ENCODE measurements at regions of chr5 and their contacts with region 1.

Region 1: GRCh38 chr5:6765612-6766525 is 52.6 kb downstream of the TENT4A start:
- DNase-seq: peak; percentile 11 to 69 (median 42)
- ATAC-seq: peak; percentile 75
- H3K4me3 ChIP-seq: no peak overlapping the region
- H3K4me3 Mint-ChIP-seq: no peak overlapping the region
- H3K27ac ChIP-seq: no peak overlapping the region
- H3K27ac Mint-ChIP-seq: peak overlapping the region in 1 of 9 donors; percentile 51
- H3K4me1 ChIP-seq: no peaks in the 10 kb centered on the region
- H3K4me1 Mint-ChIP-seq: peaks cover 0 to 9% (median 6%) of the 10 kb centered on the region in 7 donors
- H3K27me3 ChIP-seq: no peaks in the 10 kb centered on the region
- H3K27me3 Mint-ChIP-seq: peaks cover 0 to 4% (median 0%) of the 10 kb centered on the region in 5 donors

Region 2: GRCh38 chr5:6728011-6728794 is 37.7 kb before region 1 on chr5:
- CTCF ChIA-PET with region 1: no interaction called
- POLR2A ChIA-PET with region 1: no interaction called
- intact Hi-C with region 1: no loop called
- DNase-seq: no peak
- ATAC-seq: no peak
- H3K4me3 ChIP-seq: no peak overlapping the region
- H3K4me3 Mint-ChIP-seq: peak overlapping the region in 9 of 10 donors; percentile 2 to 58 (median 52)
- H3K27ac ChIP-seq: no peak overlapping the region
- H3K27ac Mint-ChIP-seq: peak overlapping the region in 8 of 9 donors; percentile 5 to 82 (median 44)
- H3K4me1 ChIP-seq: peaks cover 22 to 56% of the 10 kb centered on the region in 2 donors
- H3K4me1 Mint-ChIP-seq: peaks cover 75 to 100% (median 95%) of the 10 kb centered on the region in 7 donors
- H3K27me3 ChIP-seq: no peaks in the 10 kb centered on the region
- H3K27me3 Mint-ChIP-seq: no peaks in the 10 kb centered on the region

Region 3: GRCh38 chr5:6745706-6746222 is 20.1 kb before region 1 on chr5:
- CTCF ChIA-PET with region 1: no interaction called
- POLR2A ChIA-PET with region 1: no interaction called
- intact Hi-C with region 1: no loop called
- DNase-seq: peak in 7 of 9 donors; percentile 33 to 62 (median 53)
- ATAC-seq: peak; percentile 85
- H3K4me3 ChIP-seq: no peak overlapping the region
- H3K4me3 Mint-ChIP-seq: no peak overlapping the region
- H3K27ac ChIP-seq: no peak overlapping the region
- H3K27ac Mint-ChIP-seq: peak overlapping the region in 3 of 9 donors; percentile 4 to 48 (median 36)
- H3K4me1 ChIP-seq: no peaks in the 10 kb centered on the region
- H3K4me1 Mint-ChIP-seq: peaks cover 2 to 10% (median 6%) of the 10 kb centered on the region in 7 donors
- H3K27me3 ChIP-seq: no peaks in the 10 kb centered on the region
- H3K27me3 Mint-ChIP-seq: no peaks in the 10 kb centered on the region

Region 4: GRCh38 chr5:6837519-6838110 is 71.7 kb after region 1 on chr5:
- CTCF ChIA-PET with region 1: no interaction called
- POLR2A ChIA-PET with region 1: no interaction called
- intact Hi-C with region 1: loop called (anchors 1 to 5 kb)
- DNase-seq: peak in 1 of 9 donors; percentile 39
- ATAC-seq: no peak
- H3K4me3 ChIP-seq: no peak overlapping the region
- H3K4me3 Mint-ChIP-seq: no peak overlapping the region
- H3K27ac ChIP-seq: no peak overlapping the region
- H3K27ac Mint-ChIP-seq: no peak overlapping the region
- H3K4me1 ChIP-seq: no peaks in the 10 kb centered on the region
- H3K4me1 Mint-ChIP-seq: peaks cover 0 to 16% (median 2%) of the 10 kb centered on the region in 7 donors
- H3K27me3 ChIP-seq: no peaks in the 10 kb centered on the region
- H3K27me3 Mint-ChIP-seq: peaks cover 0 to 12% (median 0%) of the 10 kb centered on the region in 5 donors

Region 5: DNA sequence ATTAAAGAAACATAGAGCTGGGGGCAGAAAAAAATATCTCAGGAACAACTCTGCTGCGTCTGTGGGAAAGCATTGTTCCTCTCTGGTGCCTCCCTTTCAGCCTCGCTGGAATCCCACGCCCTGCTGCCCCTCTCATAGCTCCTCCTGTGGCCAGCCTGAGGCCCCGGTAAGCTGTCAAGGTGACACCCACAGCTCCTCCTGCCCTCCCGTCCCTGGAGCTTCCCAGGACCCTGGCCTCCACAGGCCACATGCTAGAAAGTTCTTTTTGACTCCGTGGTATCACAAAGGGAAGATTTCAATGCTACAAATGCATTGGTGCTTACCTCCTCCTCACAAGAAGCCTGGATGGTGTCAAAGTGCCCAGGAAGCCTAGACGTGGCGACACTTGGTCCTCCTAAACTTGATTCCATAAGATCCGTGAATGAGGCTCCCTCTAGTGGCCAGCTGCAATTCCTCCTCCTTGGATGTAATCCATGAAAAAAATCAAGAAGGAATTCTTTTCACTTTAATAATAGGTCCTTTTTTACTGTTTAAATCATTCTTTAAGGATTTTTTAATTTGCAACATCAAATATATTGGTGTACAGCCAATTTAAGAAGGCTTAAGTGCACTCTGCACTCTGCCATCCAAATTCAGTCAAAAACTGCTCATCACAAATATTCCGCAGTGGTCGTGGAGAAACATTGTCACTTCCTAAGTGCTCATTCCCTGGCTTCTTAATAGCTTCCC is 980.2 kb after region 1 on chr5:
- CTCF ChIA-PET with region 1: no interaction called
- POLR2A ChIA-PET with region 1: no interaction called
- intact Hi-C with region 1: loop called in 1 of 2 experiments (anchors 1 kb)
- DNase-seq: peak in 3 of 9 donors; percentile 3 to 39 (median 28)
- ATAC-seq: no peak
- H3K4me3 ChIP-seq: no peak overlapping the region
- H3K4me3 Mint-ChIP-seq: no peak overlapping the region
- H3K27ac ChIP-seq: no peak overlapping the region
- H3K27ac Mint-ChIP-seq: no peak overlapping the region
- H3K4me1 ChIP-seq: no peaks in the 10 kb centered on the region
- H3K4me1 Mint-ChIP-seq: peaks cover 0 to 3% (median 0%) of the 10 kb centered on the region in 7 donors
- H3K27me3 ChIP-seq: no peaks in the 10 kb centered on the region
- H3K27me3 Mint-ChIP-seq: peaks cover 1 to 11% (median 8%) of the 10 kb centered on the region in 5 donors

Region 6: DNA sequence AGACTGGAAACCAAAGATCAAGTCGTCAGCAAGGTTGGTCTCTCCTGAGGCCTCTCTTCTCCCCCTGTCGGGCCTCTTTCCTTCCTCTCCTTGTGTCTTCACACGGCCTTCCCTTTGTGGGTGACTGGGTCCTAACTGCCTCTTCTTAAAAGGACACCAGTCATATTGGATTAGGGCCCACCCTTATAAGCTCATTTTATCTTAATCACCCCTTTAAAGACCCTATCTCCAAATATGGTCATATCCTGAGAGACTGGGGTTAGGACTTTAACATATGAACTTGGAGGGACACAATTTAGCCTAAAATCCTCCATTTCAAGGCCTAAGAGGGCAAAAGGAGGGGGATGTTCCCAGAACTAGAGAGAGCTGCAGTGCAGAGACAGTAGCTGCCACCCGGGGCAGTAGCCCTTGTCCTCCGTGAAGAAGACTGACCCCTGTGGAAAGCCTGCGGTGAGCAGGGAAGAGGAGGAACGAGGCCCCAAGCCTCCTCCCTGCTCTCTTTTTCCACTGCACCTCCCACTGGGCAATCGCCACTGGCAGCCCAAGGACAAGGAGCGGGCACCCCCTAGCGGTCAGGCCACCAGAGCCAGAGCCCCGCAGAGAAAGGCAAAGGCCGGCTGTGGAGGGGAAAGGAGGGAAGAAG is 1050.1 kb after region 1 on chr5:
- CTCF ChIA-PET with region 1: no interaction called
- POLR2A ChIA-PET with region 1: no interaction called
- intact Hi-C with region 1: loop called in 1 of 2 experiments (anchors 5 kb)
- DNase-seq: peak in 8 of 9 donors; percentile 16 to 73 (median 38)
- ATAC-seq: peak; percentile 87
- H3K4me3 ChIP-seq: no peak overlapping the region
- H3K4me3 Mint-ChIP-seq: no peak overlapping the region
- H3K27ac ChIP-seq: no peak overlapping the region
- H3K27ac Mint-ChIP-seq: no peak overlapping the region
- H3K4me1 ChIP-seq: no peaks in the 10 kb centered on the region
- H3K4me1 Mint-ChIP-seq: peaks cover 0 to 6% (median 0%) of the 10 kb centered on the region in 7 donors
- H3K27me3 ChIP-seq: no peaks in the 10 kb centered on the region
- H3K27me3 Mint-ChIP-seq: peaks cover 12 to 52% (median 42%) of the 10 kb centered on the region in 5 donors